Lower leg skin (tissue), 4 donors: ENCODE measurements at regions of chr10 and their contacts with region 1.

Region 1: DNA sequence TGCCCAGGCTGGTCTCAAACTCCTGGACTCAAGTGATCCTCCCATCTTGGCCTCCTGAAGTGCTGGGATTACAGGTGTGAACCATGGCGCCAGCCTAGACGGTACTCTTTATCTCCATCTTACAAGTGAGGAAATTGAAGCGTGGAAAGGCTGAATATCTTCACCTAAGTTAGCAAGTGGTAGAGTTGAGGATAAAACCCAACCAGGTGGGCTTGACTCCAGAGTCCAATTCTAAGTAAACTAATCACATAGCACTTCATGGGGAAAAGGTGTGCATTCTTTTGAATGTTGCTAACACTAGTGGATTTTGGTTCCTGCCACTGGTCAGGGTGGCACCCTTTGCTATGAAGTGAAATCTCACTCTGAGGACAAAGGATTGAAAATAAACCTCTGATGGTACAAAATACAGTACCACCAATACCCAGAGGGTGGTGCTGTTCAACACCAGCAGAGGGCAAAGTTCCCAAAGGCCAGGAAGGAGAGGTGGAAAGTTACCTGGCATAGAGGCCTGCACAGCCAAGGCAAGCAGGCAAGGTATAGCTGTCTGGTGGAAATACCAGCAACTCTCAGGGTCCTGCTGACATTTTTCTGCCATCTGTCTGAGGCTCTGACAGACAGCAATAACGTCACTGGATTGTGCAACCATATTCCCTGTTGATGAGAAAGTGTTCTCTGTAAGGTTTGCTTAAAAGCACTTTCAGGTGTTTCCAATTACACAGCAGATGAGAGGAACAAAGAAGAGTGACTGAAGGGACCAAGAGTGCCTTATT is 17.6 kb downstream of the ZDHHC16 start:
- DNase-seq: peak in 1 of 2 donors; percentile 43
- H3K4me3 ChIP-seq: no peak overlapping the region
- CTCF ChIP-seq: peak in 1 of 3 donors; percentile 86
- POLR2A ChIP-seq: no peak

Region 2: DNA sequence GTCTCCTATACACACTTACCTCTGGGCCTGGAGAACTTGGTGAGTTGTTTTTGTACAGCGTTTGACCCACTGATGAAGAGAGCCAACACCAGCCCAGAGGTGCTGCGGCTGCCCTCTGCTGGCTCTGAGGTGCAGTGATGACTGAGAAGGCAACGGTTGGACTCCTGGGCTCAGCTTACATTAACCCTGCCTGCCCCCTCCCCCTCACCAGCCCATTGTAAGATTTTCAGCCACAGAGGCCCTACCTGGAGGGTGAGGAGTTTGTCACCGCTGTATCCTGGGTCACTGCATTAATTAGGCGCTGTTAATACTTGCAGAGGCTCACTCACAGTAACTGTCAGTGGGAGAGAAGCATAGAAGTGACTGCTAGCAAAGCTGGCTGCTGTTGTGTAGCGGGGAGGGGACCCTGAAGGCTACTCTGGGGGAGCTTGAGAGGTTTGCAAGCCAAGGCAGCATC is 90.1 kb after region 1 on chr10:
- intact Hi-C with region 1: loop called (anchors 10 kb)
- DNase-seq: peak; percentile 60 to 92
- H3K4me3 ChIP-seq: no peak overlapping the region
- CTCF ChIP-seq: peak in 1 of 3 donors; percentile 35
- POLR2A ChIP-seq: no peak

Region 3: GRCh38 chr10:97612386-97612785 is 148.8 kb after region 1 on chr10:
- intact Hi-C with region 1: loop called (anchors 10 kb)
- DNase-seq: no peak
- H3K4me3 ChIP-seq: no peak overlapping the region
- CTCF ChIP-seq: no peak
- POLR2A ChIP-seq: no peak